Posterior cingulate gyrus (tissue), 11 donors: ENCODE measurements at regions of chr7 and their contacts with region 1.

Region 1: DNA sequence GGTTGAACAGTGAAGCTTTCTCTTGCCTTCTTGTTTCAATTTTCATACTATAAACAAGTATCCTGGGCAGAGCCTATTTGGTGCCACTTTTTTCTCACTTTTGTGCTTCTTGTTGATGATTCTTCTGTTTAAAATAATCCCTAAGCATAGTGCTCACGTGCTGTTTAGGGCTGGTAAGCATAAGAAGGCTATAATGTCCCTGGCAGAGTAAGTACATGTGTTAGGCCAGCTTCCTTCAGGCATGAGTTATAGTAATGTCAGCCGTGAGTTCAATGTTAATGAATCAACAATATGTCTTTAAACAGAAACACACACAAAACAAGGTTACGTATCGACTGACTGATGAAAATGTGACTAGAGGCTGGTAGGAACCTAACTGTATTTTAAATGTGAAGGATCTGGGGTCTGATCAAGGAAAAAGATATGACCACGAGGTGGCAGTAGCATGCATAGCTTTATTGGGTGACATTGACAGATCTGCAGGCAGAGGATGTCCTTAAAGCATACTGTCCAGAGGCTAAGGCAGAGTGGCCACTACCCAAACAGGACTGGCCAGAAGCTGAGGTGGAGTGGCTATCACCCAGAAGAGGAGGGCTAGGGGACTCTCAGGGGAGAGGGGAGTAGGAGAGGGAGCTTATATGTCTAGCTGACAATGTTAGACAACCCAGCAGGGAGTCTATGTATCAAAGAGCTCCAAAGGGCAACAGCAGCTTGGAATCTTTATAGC is 113.7 kb downstream of the BRAF start:
- DNase-seq: peak in 4 of 10 donors; percentile 27 to 64 (median 58)

Region 2: DNA sequence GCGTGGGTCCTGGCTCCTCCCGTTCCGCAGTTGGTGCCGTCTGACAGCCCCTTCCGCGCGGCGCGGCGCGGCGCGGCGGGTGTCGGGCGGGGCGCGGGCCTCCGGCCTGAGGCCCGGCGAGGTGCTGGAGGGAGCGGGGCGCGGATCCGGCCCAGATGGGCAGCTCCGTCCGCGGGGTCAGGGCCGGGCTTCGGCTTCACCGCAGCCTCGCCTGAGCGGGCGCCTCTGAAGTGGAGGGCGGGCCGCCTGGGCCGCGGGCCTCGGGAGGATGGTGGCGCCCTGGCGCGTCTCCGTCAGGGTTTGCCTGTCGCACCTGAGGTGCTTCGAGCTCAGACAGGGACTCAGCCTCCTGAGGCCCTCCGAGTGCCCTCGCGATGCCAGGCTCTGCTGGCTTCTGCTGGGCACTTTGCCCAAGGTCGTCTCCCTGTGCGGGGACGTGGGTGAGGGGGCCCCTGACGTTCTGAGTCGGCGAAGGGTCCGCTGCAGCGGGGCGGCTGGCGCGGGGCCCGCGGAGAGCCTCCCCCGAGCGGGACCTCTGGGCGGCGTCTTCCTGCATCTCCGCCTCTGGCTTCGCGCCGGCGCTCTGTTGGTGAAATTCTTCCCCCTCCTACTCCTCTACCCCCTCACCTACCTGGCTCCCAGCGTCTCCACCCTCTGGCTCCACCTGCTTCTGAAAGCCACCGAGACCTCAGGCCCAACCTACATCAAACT is 137.8 kb before region 1 on chr7:
- intact Hi-C with region 1: loop called (anchors 10 kb)
- DNase-seq: peak in 6 of 10 donors; percentile 29 to 91 (median 44)

Region 3: DNA sequence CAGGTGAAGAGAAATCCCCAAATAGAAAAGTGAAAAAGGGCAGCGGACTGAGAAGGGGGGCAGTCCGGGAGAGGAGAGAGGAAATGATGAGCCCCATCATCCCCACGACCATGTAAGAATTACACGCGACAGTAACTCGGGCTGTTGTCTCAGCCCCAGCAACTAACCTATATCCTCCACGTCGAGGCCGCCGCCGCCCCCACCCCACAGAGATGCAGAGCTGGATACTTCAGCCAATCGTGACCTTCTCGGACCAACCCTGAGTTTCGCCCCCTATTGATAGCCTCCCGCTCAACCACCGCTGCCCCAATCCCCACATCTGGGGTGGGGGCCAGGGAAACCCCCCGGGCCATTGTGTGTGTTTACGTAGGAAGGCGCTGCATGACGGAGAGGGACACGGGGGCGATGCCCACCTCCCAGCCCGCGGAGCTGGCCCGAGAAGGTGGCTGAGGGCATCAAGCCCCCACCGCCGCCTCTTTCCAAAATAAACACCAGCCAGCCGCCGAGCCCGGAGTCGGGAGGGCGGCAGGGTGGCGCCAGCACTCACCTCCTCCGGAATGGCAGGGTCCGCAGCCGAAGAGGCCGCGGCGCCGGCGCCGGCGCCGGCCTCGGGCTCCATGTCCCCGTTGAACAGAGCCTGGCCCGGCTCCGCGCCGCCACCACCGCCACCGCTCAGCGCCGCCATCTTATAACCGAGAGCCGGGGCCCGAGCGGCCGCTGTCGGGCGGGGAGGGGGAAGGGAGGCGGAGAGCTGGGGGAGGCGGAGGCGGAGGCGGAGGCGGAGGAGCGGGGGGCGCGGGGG is 113.2 kb after region 1 on chr7:
- intact Hi-C with region 1: loop called (anchors 2 kb)
- DNase-seq: peak; percentile 54 to 96 (median 70)

Region 4: GRCh38 chr7:140983802-140984201 is 172.8 kb after region 1 on chr7:
- intact Hi-C with region 1: no loop called
- DNase-seq: no peak

Region 5: GRCh38 chr7:141533149-141533949 is 722.4 kb after region 1 on chr7:
- intact Hi-C with region 1: loop called (anchors 10 kb)
- DNase-seq: peak; percentile 49 to 94 (median 72)